Left cardiac atrium (tissue), 4 donors: ENCODE measurements at regions of chr3 and their contacts with region 1.

Region 1: GRCh38 chr3:124351430-124352148 is 359.7 kb upstream of the ROPN1 start:
- DNase-seq: no peak
- ATAC-seq: peak; percentile 82 to 89

Region 2: DNA sequence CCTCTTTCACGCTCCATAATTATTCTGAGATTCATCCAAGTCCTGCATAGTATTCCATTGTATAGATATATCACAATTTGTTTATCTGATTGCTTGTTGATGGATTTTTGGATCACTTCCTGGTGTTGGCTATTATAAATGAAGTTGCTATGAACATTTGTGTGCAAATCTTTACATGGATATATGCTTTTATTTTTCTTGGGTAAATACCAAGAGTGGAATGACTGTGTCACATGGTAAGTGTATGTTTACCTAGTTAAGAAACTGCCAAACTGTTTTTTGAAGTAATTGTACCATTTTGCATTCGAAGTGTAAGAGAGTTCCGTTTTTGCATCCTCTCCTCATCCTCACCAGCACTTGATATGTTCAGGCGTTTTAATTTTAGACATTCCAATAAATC is 325.1 kb before region 1 on chr3:
- intact Hi-C with region 1: loop called in 1 of 2 experiments (anchors 10 kb)
- DNase-seq: no peak
- ATAC-seq: no peak

Region 3: GRCh38 chr3:124260206-124260915 is 91.2 kb before region 1 on chr3:
- intact Hi-C with region 1: no loop called
- DNase-seq: peak; percentile 66
- ATAC-seq: peak; percentile 87 to 95

Region 4: GRCh38 chr3:124467980-124468902 is 116.7 kb after region 1 on chr3:
- intact Hi-C with region 1: loop called (anchors 2 to 5 kb)
- DNase-seq: peak; percentile 44
- ATAC-seq: peak; percentile 65 to 78